ENCODE measurements at regions of chr3 and their contacts with region 1.

Region 1: GRCh38 chr3:136075218-136075808 is 109.8 kb downstream of the PPP2R3A start:
- DNase-seq: peak; percentile 40
- ATAC-seq: peak; percentile 89
- H3K4me3 ChIP-seq: no peak overlapping the region
- H3K27ac ChIP-seq: no peak overlapping the region
- H3K4me1 ChIP-seq: no peaks in the 10 kb centered on the region
- H3K27me3 ChIP-seq: no peaks in the 10 kb centered on the region; a peak in 1 of 4 replicates
- CTCF ChIP-seq: peak; percentile 76 to 96 (median 91)
- EP300 ChIP-seq: no peak
- POLR2A ChIP-seq: no peak
- RAD21 ChIP-seq: peak; percentile 99

Region 2: GRCh38 chr3:136142592-136142991 is 67.3 kb after region 1 on chr3:
- CTCF ChIA-PET with region 1: no interaction called
- POLR2A ChIA-PET with region 1: no interaction called
- RAD21 ChIA-PET with region 1: no interaction called
- SMC1A ChIA-PET with region 1: no interaction called
- in situ Hi-C with region 1: no loop called
- intact Hi-C with region 1: loop called (anchors 5 kb)
- DNase-seq: no peak
- ATAC-seq: peak; percentile 58
- H3K4me3 ChIP-seq: no peak overlapping the region
- H3K27ac ChIP-seq: no peak overlapping the region
- H3K4me1 ChIP-seq: no peaks in the 10 kb centered on the region
- H3K27me3 ChIP-seq: no peaks in the 10 kb centered on the region
- CTCF ChIP-seq: no peak
- EP300 ChIP-seq: no peak
- POLR2A ChIP-seq: 0 out of 2 replicates have a peak, but pooled peaks have one; percentile 8
- RAD21 ChIP-seq: no peak

Region 3: GRCh38 chr3:136250226-136250902 is 175.1 kb after region 1 on chr3 and contains the start of gene PCCB:
- CTCF ChIA-PET with region 1: interaction called, 43 read pairs
- POLR2A ChIA-PET with region 1: no interaction called
- RAD21 ChIA-PET with region 1: interaction called, 8 read pairs
- SMC1A ChIA-PET with region 1: interaction called, 16 read pairs
- in situ Hi-C with region 1: no loop called
- intact Hi-C with region 1: loop called (anchors 2 kb)
- DNase-seq: peak; percentile 76
- ATAC-seq: peak; percentile 99
- H3K4me3 ChIP-seq: peak within 1 kb of the TSS; percentile 66
- H3K27ac ChIP-seq: peak within 1 kb of the TSS; percentile 71
- H3K4me1 ChIP-seq: peaks cover 15% of the 10 kb centered on the region
- H3K27me3 ChIP-seq: no peaks in the 10 kb centered on the region
- CTCF ChIP-seq: peak; percentile 62 to 75 (median 75)
- EP300 ChIP-seq: 0 out of 4 replicates have a peak, but pooled peaks of 1 of the 2 experiments have one; percentile 25
- POLR2A ChIP-seq: peak; percentile 96
- RAD21 ChIP-seq: peak; percentile 56
- polyA plus RNA-seq, gene PCCB: 67.2 to 73.3 TPM

Region 4: DNA sequence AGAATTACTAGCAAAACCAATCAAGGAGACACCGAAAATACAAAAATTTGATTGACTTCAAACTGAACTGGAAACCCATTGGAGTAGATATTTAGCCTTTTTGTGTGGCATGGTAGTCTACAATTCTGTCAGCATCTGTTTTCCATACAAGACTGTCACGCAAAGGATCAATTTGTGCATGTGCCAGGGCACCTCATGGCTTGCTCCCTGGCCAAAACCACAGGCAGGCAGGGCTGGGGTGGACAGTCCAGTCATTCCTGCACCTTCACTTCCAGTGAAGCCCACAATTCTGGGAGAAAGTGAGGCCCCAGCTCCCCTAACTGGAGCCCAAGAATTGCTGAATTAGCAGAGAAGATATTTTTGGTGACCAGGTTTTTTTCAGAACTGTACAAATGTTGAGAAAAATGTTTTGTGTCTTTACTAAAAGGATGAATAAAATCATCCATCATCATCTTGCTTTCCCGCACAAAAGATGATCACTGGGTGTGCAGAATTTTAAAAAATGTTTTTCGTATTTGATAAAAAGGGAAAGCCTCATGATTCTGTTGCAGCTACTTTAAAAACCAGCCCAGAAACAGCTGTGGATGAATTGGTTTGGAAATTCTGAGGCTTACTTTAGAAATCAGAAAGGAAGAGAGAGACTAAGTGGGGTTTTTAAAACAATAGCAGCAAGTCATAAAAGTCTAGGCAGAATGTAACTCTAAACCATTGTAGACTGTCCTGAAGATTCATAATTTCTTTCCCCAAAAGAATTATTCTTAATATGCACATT is 261.2 kb after region 1 on chr3:
- CTCF ChIA-PET with region 1: interaction called, 5 read pairs
- POLR2A ChIA-PET with region 1: no interaction called
- RAD21 ChIA-PET with region 1: interaction called, 5 read pairs
- SMC1A ChIA-PET with region 1: interaction called, 3 read pairs
- in situ Hi-C with region 1: no loop called
- intact Hi-C with region 1: loop called (anchors 5 kb)
- DNase-seq: no peak
- ATAC-seq: no peak
- H3K4me3 ChIP-seq: no peak overlapping the region
- H3K27ac ChIP-seq: no peak overlapping the region
- H3K4me1 ChIP-seq: no peaks in the 10 kb centered on the region
- H3K27me3 ChIP-seq: no peaks in the 10 kb centered on the region
- CTCF ChIP-seq: no peak
- EP300 ChIP-seq: no peak
- POLR2A ChIP-seq: no peak
- RAD21 ChIP-seq: no peak

Region 5: GRCh38 chr3:136396916-136397315 is 321.6 kb after region 1 on chr3:
- CTCF ChIA-PET with region 1: interaction called, 51 read pairs
- POLR2A ChIA-PET with region 1: no interaction called
- RAD21 ChIA-PET with region 1: interaction called, 12 read pairs
- SMC1A ChIA-PET with region 1: interaction called, 13 read pairs
- in situ Hi-C with region 1: no loop called
- intact Hi-C with region 1: no loop called
- DNase-seq: no peak
- ATAC-seq: no peak
- H3K4me3 ChIP-seq: no peak overlapping the region
- H3K27ac ChIP-seq: no peak overlapping the region
- H3K4me1 ChIP-seq: no peaks in the 10 kb centered on the region
- H3K27me3 ChIP-seq: no peaks in the 10 kb centered on the region
- CTCF ChIP-seq: no peak
- EP300 ChIP-seq: no peak
- POLR2A ChIP-seq: no peak
- RAD21 ChIP-seq: no peak

Region 6: GRCh38 chr3:136495213-136495612 is 419.9 kb after region 1 on chr3:
- CTCF ChIA-PET with region 1: no interaction called
- POLR2A ChIA-PET with region 1: no interaction called
- RAD21 ChIA-PET with region 1: no interaction called
- SMC1A ChIA-PET with region 1: no interaction called
- in situ Hi-C with region 1: no loop called
- intact Hi-C with region 1: no loop called
- DNase-seq: no peak
- ATAC-seq: no peak
- H3K4me3 ChIP-seq: no peak overlapping the region
- H3K27ac ChIP-seq: no peak overlapping the region
- H3K4me1 ChIP-seq: no peaks in the 10 kb centered on the region
- H3K27me3 ChIP-seq: no peaks in the 10 kb centered on the region
- CTCF ChIP-seq: no peak
- EP300 ChIP-seq: no peak
- POLR2A ChIP-seq: no peak
- RAD21 ChIP-seq: no peak

Measured in GM12878 (cell line).